Posterior vena cava (tissue), 2 donors: ENCODE measurements at regions of chr4 and their contacts with region 1.

Region 1: DNA sequence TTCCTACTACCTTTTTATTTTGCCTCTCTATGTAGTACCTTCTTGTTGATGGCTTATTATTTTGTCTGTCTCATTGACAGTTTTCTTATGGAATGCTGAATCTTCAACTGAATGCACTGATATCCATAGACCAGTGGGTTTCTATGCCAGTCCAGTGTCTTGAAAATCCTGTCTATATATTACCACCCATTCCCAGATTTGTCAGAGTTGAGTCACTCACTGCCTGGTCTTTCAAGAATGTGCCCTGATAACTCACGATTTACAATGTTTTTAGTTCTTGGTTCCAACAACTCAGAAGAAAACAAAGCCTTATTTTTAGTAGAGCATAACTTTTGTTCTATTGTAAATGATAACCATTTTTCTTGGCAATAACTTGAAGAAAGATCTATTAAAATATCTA is 606.0 kb upstream of the PITX2 start:
- DNase-seq: no peak

Region 2: GRCh38 chr4:111187103-111187502 is 41.8 kb before region 1 on chr4:
- intact Hi-C with region 1: loop called in 1 of 2 experiments (anchors 2 kb)
- DNase-seq: no peak

Region 3: GRCh38 chr4:111303806-111304205 is 74.9 kb after region 1 on chr4:
- intact Hi-C with region 1: loop called in 1 of 2 experiments (anchors 2 kb)
- DNase-seq: no peak